ENCODE measurements at regions of chr6 and their contacts with region 1.

Region 1: DNA sequence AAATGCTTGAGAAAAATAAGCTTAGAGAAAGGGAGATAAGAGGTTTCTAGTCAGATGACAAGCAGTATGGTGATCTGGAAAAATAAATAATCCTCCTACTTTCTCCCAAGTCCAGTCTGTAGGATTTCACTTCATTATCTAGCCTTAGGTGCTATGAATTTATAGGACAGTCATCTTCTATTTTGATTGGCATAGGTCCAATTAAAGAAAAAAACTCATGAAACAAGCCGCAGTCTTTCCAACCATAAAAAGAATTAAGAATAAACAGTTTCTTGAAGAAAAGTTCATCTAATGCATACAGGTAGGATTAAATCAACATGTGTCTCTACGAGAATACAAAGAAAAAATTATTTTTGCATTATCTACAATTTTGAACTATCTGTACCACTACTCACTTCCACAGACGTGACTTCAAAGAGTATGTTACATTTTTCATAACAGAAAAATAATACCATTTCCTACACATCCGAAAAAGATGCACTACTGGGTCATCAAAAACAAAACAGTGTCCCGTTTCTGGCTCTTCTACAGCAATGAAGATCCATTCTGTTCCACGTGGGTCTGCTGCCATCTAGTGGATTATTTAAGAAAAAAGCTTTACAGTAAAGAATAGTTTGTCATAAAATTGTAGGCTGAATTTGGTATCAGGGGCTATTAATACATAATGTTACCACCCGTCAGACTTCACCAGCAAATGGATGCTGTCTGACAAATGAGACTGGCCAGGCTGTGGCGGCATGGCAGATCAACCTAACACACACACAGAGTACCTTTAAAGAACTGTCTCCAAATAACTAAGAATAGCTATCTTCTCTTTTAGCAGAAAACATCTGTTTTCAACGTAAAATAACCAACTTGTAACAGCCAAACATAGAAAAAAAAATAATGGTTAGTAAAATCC is 28.9 kb downstream of the STX7 start:
- DNase-seq: no peak
- ATAC-seq: peak; percentile 70

Region 2: DNA sequence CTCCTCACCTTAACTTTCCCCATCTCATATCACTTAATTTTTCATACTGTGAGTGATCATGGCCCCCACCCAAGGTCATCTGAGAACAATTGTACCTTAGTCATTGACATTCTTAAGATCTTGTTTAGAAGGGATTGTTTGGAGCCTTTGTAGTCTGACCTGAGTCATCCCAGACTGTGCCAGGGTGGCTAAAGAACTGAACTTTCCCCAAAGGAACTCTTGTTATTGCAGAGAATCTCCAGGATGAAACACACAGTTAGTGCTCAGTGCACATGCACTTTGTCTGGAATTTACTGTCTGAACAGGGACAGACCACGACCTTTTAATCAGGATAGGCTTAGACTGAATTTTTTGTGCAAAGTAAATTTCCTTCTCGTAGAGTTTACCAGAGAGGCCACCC is 420.3 kb before region 1 on chr6:
- intact Hi-C with region 1: no loop called
- DNase-seq: no peak
- ATAC-seq: no peak

Region 3: GRCh38 chr6:132300323-132300949 is 183.6 kb before region 1 on chr6:
- intact Hi-C with region 1: loop called in 1 of 2 experiments (anchors 5 kb)
- DNase-seq: peak; percentile 25 to 32
- ATAC-seq: peak; percentile 69